ENCODE measurements at regions of chr19 and their contacts with region 1.

Region 1: DNA sequence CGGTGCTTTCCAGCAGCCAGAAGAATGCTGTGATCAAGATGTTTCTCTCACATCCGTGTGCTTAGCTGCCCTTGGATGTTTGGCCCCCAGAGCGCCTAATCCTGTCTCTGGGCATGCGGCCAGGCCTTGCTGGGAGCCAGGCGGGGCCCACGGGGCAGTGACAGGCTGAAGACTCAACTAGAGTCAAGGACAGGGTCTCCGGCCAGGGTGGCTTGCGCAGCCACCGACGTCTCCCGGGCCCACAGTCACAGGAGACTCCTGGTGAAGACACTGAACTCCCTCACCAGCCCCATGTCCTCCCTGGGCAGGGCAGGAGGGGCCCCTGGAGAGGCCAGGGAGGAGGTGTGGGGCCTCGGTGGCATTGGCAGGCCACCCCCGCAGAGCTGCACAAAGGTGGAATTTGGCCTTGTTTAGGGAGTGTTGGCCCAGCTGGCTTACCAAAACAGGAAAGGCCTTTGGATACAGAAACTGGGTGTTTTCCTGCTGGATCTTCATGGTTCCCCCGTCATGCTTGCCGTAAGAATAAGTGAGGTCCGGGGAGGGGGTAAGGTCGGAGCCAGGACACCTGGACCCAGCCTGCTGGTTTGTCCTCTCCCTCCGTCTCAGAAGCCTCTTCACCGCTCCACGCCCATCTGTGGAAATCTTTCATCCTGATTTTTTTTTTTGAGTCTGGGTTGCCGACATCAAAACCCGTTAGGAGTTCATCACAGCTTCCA is 10.0 kb upstream of the NDUFS7 start:
- DNase-seq: no peak
- H3K4me3 ChIP-seq: no peak overlapping the region
- H3K27me3 ChIP-seq: no peaks in the 10 kb centered on the region
- CTCF ChIP-seq: no peak

Region 2: GRCh38 chr19:1103708-1104310 is 269.9 kb before region 1 on chr19 and contains the start of gene GPX4:
- CTCF ChIA-PET with region 1: no interaction called
- POLR2A ChIA-PET with region 1: no interaction called
- DNase-seq: peak; percentile 93
- H3K4me3 ChIP-seq: peak within 1 kb of the TSS; percentile 80
- H3K27me3 ChIP-seq: no peaks in the 10 kb centered on the region
- CTCF ChIP-seq: no peak
- polyA plus RNA-seq, gene GPX4: 463 and 626 TPM in 2 replicates

Region 3: GRCh38 chr19:1360818-1361461 is 12.8 kb before region 1 on chr19:
- CTCF ChIA-PET with region 1: interaction called, 3 read pairs
- POLR2A ChIA-PET with region 1: interaction called, 22 read pairs
- DNase-seq: peak; percentile 77
- H3K4me3 ChIP-seq: peak overlapping the region; percentile 27
- H3K27me3 ChIP-seq: no peaks in the 10 kb centered on the region
- CTCF ChIP-seq: no peak

Region 4: GRCh38 chr19:1394252-1395193 is 20.8 kb after region 1 on chr19:
- CTCF ChIA-PET with region 1: no interaction called
- POLR2A ChIA-PET with region 1: no interaction called
- DNase-seq: no peak
- H3K4me3 ChIP-seq: no peak overlapping the region
- H3K27me3 ChIP-seq: no peaks in the 10 kb centered on the region
- CTCF ChIP-seq: no peak

Region 5: DNA sequence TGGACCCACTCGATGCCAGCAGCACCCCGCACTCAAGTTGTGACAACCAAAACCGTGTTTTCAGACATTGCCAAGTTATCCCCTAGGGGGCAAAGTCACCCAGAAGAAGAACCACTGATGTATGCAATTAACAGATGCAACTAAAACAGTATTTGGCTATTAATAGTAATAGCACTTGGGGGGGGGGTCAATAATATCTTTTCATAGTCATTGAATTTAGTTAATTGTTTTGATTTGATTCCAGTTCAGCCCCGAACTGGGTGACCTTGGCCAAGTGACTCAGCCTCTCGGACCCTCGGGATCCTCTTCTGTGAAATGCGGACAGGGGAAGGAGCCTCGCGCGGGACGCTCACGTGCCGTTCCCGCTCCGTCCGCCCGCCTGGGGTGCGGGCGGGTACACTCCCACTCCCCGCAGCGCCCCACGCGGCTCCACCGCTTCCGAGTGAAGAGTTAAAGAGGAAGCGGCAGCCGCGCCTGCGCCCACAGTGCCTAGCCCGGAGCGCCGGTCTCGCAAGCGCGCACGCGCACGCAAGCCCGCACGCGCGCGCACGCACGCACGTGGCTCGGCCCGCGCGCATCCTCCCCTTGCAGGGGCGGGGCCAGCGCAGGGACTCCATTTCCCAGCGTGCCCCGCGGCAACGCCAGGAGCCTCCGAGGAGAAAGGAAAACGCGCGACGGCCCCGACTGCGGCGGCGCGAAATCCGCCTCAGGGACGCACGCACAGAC is 33.2 kb after region 1 on chr19:
- CTCF ChIA-PET with region 1: no interaction called
- POLR2A ChIA-PET with region 1: no interaction called
- DNase-seq: peak; percentile 85
- H3K4me3 ChIP-seq: peak overlapping the region; percentile 66
- H3K27me3 ChIP-seq: no peaks in the 10 kb centered on the region
- CTCF ChIP-seq: peak; percentile 64

Region 6: GRCh38 chr19:1490311-1491113 is 116.8 kb after region 1 on chr19 and contains the start of gene PCSK4:
- CTCF ChIA-PET with region 1: no interaction called
- POLR2A ChIA-PET with region 1: no interaction called
- DNase-seq: peak; percentile 90
- H3K4me3 ChIP-seq: peak within 1 kb of the TSS; percentile 61
- H3K27me3 ChIP-seq: peaks cover 4% of the 10 kb centered on the region
- CTCF ChIP-seq: no peak
- polyA plus RNA-seq, gene PCSK4: 0.59 and 1.3 TPM in 2 replicates